ENCODE measurements at regions of chr3 and their contacts with region 1.

Region 1: GRCh38 chr3:38496131-38496910 is at the start of gene EXOG:
- DNase-seq: peak; percentile 87
- H3K4me3 Mint-ChIP-seq: peak within 1 kb of the TSS; percentile 95
- H3K27ac Mint-ChIP-seq: peak within 1 kb of the TSS; percentile 87
- H3K4me1 Mint-ChIP-seq: peaks cover 34% of the 10 kb centered on the region
- H3K27me3 Mint-ChIP-seq: no peaks in the 10 kb centered on the region
- total RNA-seq, gene EXOG: 20.0 and 21.6 TPM in 2 replicates

Region 2: GRCh38 chr3:37622999-37623883 is 873.1 kb before region 1 on chr3:
- intact Hi-C with region 1: no loop called
- DNase-seq: no peak
- H3K4me3 Mint-ChIP-seq: no peak overlapping the region
- H3K27ac Mint-ChIP-seq: no peak overlapping the region
- H3K4me1 Mint-ChIP-seq: peaks cover 10% of the 10 kb centered on the region
- H3K27me3 Mint-ChIP-seq: no peaks in the 10 kb centered on the region

Region 3: DNA sequence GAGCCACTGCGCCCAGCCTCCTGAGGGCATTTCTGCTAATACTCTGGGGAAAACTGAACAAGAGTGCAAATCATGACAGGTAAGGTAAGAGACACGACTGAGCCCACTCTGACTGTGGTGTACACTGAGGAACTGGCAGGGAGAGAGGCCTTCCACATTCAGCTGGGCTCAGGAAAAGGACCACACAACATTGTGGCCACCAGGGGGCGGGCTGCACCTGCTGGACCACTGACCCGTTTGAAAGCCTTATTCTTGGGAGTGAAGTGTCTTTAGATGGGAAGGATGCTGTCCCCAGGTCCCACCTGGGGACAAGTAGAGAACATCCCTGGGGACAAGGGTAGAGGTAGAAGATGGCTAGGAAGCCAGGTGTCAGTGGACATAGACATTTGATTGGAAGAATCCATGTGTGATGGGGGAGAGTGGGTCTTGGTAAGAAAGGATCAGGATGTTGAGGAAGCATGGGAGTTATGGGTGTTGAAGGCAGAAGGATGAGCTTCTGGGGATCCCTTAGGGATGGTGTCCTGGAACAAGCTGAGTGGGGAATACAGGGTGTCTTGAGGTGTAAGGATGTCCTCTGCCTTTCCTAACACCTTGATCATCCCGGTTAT is 640.9 kb before region 1 on chr3:
- intact Hi-C with region 1: no loop called
- DNase-seq: peak; percentile 65
- H3K4me3 Mint-ChIP-seq: no peak overlapping the region
- H3K27ac Mint-ChIP-seq: no peak overlapping the region
- H3K4me1 Mint-ChIP-seq: no peaks in the 10 kb centered on the region
- H3K27me3 Mint-ChIP-seq: peaks cover 7% of the 10 kb centered on the region

Region 4: GRCh38 chr3:37996785-37997301 is 499.5 kb before region 1 on chr3:
- intact Hi-C with region 1: loop called (anchors 2 kb)
- DNase-seq: peak; percentile 80
- H3K4me3 Mint-ChIP-seq: peak overlapping the region; percentile 9
- H3K27ac Mint-ChIP-seq: peak overlapping the region; percentile 70
- H3K4me1 Mint-ChIP-seq: peaks cover 61% of the 10 kb centered on the region
- H3K27me3 Mint-ChIP-seq: no peaks in the 10 kb centered on the region

Region 5: DNA sequence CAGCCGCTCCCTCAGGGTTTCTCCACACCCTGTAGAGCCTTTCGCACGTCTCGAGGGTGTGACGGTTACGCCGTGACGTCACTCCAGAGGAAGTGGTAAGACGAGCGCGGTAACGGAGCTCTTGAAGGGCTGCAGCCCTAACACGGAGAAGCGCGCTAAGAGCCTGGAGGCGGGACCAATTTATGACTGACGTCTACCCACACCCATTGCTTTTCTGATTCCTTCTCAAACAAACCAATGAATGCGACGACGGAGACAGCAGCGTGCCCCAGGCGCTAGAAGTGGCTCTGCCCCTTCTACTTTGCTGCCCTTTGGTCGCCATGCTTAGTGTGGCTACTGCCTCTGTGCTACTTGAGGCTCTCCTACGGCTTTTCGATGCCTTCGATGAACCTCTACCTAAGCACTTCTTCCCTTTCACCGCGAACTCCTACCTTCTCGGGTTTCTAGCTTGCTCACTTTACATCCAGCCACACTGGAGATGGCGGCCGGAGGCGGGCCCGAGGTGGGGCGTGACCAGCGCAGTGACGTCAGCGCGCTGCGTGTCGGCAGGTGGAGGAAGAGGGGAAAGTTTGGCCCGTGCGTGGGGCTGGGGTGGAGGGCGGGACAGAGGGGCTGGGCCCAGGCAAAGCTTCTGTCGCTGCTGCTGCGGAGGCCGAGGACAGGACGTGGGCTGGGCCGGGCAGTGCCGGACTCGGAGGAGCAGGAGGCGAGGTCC is 331.2 kb before region 1 on chr3 and contains the start of gene OXSR1:
- intact Hi-C with region 1: loop called (anchors 1 kb)
- DNase-seq: peak; percentile 96
- H3K4me3 Mint-ChIP-seq: peak within 1 kb of the TSS; percentile 98
- H3K27ac Mint-ChIP-seq: peak within 1 kb of the TSS; percentile 100
- H3K4me1 Mint-ChIP-seq: peaks cover 43% of the 10 kb centered on the region
- H3K27me3 Mint-ChIP-seq: no peaks in the 10 kb centered on the region
- total RNA-seq, gene OXSR1: 48.6 and 50.8 TPM in 2 replicates

Region 6: GRCh38 chr3:38421679-38422336 is 74.5 kb before region 1 on chr3:
- intact Hi-C with region 1: no loop called
- DNase-seq: no peak
- H3K4me3 Mint-ChIP-seq: no peak overlapping the region
- H3K27ac Mint-ChIP-seq: no peak overlapping the region
- H3K4me1 Mint-ChIP-seq: peaks cover 31% of the 10 kb centered on the region
- H3K27me3 Mint-ChIP-seq: no peaks in the 10 kb centered on the region

Region 7: DNA sequence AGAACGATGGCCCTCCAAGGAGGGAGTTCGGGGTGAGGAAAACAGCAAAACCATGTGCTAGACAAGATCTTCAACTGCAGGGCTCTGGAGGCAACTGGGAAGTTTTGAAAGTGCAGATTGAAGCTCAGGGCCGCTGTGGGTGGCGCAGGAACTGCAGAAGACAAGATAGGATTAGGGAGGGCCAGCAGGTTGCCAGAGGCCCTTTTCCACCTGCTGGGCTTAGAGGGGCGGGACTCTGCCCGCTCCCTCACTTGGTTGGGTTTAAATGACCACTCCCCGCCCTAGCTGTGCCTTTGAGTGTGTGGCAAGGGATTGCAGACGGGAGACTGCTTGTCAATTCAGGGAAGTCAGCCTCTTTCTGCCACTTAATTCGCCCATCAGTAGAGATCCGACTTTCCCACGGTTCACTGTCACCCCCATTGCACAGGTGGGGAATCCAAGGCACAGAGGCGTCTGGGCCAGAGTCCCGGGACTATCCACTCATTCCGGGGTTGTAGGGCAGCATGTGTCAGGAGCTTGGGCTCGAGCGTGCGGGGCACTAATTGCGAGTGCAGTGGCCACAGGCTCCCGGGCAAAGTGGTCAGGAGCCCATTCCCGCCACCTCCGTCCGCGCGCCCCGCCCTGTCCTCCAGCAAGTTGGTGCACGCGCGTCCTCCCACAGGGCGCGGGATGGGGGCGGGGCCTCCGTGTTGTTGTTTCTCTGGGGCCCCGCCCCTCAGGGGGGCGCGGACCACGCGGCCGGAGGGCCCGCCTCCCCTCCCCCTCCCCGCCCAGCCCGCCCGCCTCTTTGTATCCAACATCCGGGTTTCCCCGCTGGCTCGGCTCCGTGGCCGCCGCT is 43.0 kb before region 1 on chr3 and contains the start of gene ACVR2B:
- intact Hi-C with region 1: loop called (anchors 1 kb)
- DNase-seq: peak; percentile 66
- H3K4me3 Mint-ChIP-seq: peak within 1 kb of the TSS; percentile 97
- H3K27ac Mint-ChIP-seq: peak within 1 kb of the TSS; percentile 80
- H3K4me1 Mint-ChIP-seq: peaks cover 10% of the 10 kb centered on the region
- H3K27me3 Mint-ChIP-seq: peaks cover 15% of the 10 kb centered on the region
- total RNA-seq, gene ACVR2B: 10.4 and 10.5 TPM in 2 replicates

Region 8: DNA sequence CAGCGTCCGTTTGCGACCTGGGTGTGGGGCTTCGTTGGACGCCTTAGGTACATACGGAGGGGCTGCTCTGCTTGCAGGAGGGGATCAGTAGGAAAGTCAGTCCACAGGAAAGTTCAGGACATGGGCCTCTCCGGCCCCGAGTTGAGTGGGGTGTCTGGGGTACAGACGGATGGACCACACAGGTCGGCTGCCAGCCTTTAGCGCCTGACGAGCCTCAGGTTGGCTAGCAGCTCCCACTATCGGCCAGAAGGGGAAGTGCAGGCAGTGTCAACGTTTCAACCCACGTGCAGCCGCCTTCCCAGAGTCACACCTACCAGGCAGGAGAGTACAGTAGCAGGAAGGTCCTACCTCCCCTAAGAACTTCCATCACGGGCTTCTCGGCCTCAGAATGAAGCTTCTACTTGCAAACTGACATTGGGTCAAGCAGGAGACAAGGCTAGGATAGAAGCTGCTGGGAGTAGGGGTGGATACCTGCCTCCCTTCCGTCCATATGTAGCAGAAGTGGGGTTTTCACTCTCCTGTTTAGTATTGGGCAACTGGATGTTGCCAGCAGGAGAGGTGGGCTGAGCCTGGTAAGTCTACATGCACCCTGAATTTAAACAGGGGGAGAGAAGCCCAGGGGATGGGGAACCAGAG is 155.0 kb after region 1 on chr3:
- intact Hi-C with region 1: loop called (anchors 1 kb)
- DNase-seq: peak; percentile 55
- H3K4me3 Mint-ChIP-seq: no peak overlapping the region
- H3K27ac Mint-ChIP-seq: no peak overlapping the region
- H3K4me1 Mint-ChIP-seq: peaks cover 12% of the 10 kb centered on the region
- H3K27me3 Mint-ChIP-seq: peaks cover 17% of the 10 kb centered on the region

Region 9: DNA sequence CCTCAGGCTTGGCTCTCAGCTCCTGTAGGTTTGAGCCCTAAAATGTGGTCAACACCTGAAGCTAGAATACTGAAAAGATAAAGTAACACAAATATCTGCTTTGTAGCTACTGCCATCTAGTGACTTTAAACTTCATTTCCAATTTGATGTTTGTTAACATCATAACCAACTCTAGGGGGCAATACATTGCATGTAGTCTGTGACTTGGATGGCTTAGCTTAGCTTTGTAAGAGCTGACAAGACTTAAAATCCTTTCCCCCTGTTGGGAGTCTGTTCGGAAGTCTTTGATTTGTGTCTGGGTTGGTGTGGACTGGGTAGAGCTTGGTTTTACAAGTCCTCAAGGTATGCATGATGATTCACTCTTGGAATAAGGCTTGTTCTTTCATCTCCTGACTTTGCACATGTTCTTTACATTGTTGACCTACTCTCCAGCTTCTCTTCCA is 503.7 kb after region 1 on chr3:
- intact Hi-C with region 1: loop called (anchors 1 kb)
- DNase-seq: no peak
- H3K4me3 Mint-ChIP-seq: no peak overlapping the region
- H3K27ac Mint-ChIP-seq: no peak overlapping the region
- H3K4me1 Mint-ChIP-seq: no peaks in the 10 kb centered on the region
- H3K27me3 Mint-ChIP-seq: peaks cover 21% of the 10 kb centered on the region